CD4-positive, alpha-beta T cell (primary cell): ENCODE measurements at regions of chr14 and their contacts with region 1.

Region 1: GRCh38 chr14:61321385-61322010 is at the start of gene PRKCH:
- DNase-seq: peak; percentile 72 to 93 (median 84)
- ATAC-seq: peak; percentile 73
- H3K4me3 ChIP-seq: peak within 1 kb of the TSS; percentile 95
- H3K4me3 Mint-ChIP-seq: peak within 1 kb of the TSS; percentile 96
- H3K27ac ChIP-seq: peak within 1 kb of the TSS; percentile 66 to 87
- H3K27ac Mint-ChIP-seq: no peak within 1 kb of the TSS
- H3K4me1 ChIP-seq: peaks cover 22% of the 10 kb centered on the region
- H3K4me1 Mint-ChIP-seq: peaks cover 26% of the 10 kb centered on the region
- H3K27me3 ChIP-seq: no peaks in the 10 kb centered on the region
- H3K27me3 Mint-ChIP-seq: no peaks in the 10 kb centered on the region
- CTCF ChIP-seq: peak; percentile 32
- total RNA-seq, gene PRKCH: 378 to 385 TPM

Region 2: GRCh38 chr14:61244009-61244408 is 77.5 kb before region 1 on chr14:
- CTCF ChIA-PET with region 1: no interaction called
- POLR2A ChIA-PET with region 1: no interaction called
- intact Hi-C with region 1: no loop called
- DNase-seq: no peak
- ATAC-seq: no peak
- H3K4me3 ChIP-seq: no peak overlapping the region
- H3K4me3 Mint-ChIP-seq: no peak overlapping the region
- H3K27ac ChIP-seq: no peak overlapping the region
- H3K27ac Mint-ChIP-seq: no peak overlapping the region
- H3K4me1 ChIP-seq: no peaks in the 10 kb centered on the region
- H3K4me1 Mint-ChIP-seq: no peaks in the 10 kb centered on the region
- H3K27me3 ChIP-seq: no peaks in the 10 kb centered on the region
- H3K27me3 Mint-ChIP-seq: peaks cover 32% of the 10 kb centered on the region
- CTCF ChIP-seq: no peak

Region 3: GRCh38 chr14:61296719-61297502 is 24.6 kb before region 1 on chr14:
- CTCF ChIA-PET with region 1: interaction called, 4 read pairs
- POLR2A ChIA-PET with region 1: interaction called, 7 read pairs
- intact Hi-C with region 1: loop called in 1 of 2 experiments (anchors 2 kb)
- DNase-seq: peak in 4 of 14 experiments; percentile 23 to 80 (median 75)
- ATAC-seq: peak; percentile 76
- H3K4me3 ChIP-seq: no peak overlapping the region
- H3K4me3 Mint-ChIP-seq: no peak overlapping the region
- H3K27ac ChIP-seq: no peak overlapping the region
- H3K27ac Mint-ChIP-seq: no peak overlapping the region
- H3K4me1 ChIP-seq: peaks cover 18% of the 10 kb centered on the region
- H3K4me1 Mint-ChIP-seq: peaks cover 56% of the 10 kb centered on the region
- H3K27me3 ChIP-seq: no peaks in the 10 kb centered on the region
- H3K27me3 Mint-ChIP-seq: no peaks in the 10 kb centered on the region
- CTCF ChIP-seq: peak; percentile 77

Region 4: DNA sequence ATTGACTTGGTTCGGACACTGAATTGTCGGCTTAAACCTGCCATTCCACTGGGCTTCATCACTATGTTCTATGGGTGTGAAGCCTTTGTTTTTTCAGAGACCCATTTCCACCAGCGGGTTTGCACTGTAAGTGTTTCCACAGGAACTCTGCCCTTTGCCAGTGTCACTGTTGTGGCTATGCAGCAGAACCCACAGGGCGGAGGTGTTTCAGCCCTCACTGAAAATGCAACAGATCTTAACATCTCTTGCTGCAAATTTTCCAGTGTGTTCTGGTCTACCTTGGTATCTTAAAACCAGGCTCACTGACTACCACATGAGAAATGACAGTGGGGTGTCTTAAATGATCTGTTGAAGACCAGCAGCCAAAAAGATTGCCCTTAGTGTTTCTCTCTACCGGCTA is 21.0 kb after region 1 on chr14:
- CTCF ChIA-PET with region 1: interaction called, 23 read pairs
- POLR2A ChIA-PET with region 1: interaction called, 185 read pairs
- intact Hi-C with region 1: loop called (anchors 1 to 2 kb)
- DNase-seq: peak; percentile 60 to 93 (median 76)
- ATAC-seq: peak; percentile 57
- H3K4me3 ChIP-seq: peak overlapping the region; percentile 23
- H3K4me3 Mint-ChIP-seq: peak overlapping the region; percentile 87
- H3K27ac ChIP-seq: peak overlapping the region; percentile 79 to 88
- H3K27ac Mint-ChIP-seq: peak overlapping the region; percentile 99
- H3K4me1 ChIP-seq: peaks cover 90% of the 10 kb centered on the region
- H3K4me1 Mint-ChIP-seq: peaks cover 92% of the 10 kb centered on the region
- H3K27me3 ChIP-seq: no peaks in the 10 kb centered on the region
- H3K27me3 Mint-ChIP-seq: no peaks in the 10 kb centered on the region
- CTCF ChIP-seq: no peak

Region 5: DNA sequence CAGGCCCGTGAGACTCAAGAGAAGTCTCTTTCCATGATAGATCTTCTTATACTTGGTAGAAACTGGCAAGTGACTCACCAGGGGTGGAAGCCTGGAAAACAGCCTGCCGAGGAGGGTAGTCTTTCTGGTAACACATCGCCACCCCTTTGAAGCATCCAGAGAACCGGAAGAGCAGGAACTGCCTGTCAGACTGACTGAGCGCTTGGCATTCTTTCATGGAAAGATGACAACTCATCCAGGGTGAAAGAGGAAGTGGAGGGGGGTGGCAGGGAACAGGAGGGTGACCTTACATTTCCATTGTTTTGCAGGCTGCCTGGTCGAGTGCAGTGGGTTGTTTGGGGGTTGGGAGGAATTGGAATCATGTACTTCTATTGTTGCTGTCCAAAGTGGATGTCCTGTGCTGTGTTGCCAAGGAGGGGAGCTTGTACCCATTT is 34.4 kb after region 1 on chr14:
- CTCF ChIA-PET with region 1: interaction called, 5 read pairs
- POLR2A ChIA-PET with region 1: interaction called, 5 read pairs
- intact Hi-C with region 1: loop called in 1 of 2 experiments (anchors 5 kb)
- DNase-seq: peak in 8 of 14 experiments; percentile 39 to 67 (median 52)
- ATAC-seq: peak; percentile 80
- H3K4me3 ChIP-seq: no peak overlapping the region
- H3K4me3 Mint-ChIP-seq: peak overlapping the region; percentile 81
- H3K27ac ChIP-seq: peak overlapping the region in 1 of 2 donors; percentile 7
- H3K27ac Mint-ChIP-seq: peak overlapping the region; percentile 99
- H3K4me1 ChIP-seq: peaks cover 71% of the 10 kb centered on the region
- H3K4me1 Mint-ChIP-seq: peaks cover 98% of the 10 kb centered on the region
- H3K27me3 ChIP-seq: no peaks in the 10 kb centered on the region
- H3K27me3 Mint-ChIP-seq: no peaks in the 10 kb centered on the region
- CTCF ChIP-seq: no peak

Region 6: DNA sequence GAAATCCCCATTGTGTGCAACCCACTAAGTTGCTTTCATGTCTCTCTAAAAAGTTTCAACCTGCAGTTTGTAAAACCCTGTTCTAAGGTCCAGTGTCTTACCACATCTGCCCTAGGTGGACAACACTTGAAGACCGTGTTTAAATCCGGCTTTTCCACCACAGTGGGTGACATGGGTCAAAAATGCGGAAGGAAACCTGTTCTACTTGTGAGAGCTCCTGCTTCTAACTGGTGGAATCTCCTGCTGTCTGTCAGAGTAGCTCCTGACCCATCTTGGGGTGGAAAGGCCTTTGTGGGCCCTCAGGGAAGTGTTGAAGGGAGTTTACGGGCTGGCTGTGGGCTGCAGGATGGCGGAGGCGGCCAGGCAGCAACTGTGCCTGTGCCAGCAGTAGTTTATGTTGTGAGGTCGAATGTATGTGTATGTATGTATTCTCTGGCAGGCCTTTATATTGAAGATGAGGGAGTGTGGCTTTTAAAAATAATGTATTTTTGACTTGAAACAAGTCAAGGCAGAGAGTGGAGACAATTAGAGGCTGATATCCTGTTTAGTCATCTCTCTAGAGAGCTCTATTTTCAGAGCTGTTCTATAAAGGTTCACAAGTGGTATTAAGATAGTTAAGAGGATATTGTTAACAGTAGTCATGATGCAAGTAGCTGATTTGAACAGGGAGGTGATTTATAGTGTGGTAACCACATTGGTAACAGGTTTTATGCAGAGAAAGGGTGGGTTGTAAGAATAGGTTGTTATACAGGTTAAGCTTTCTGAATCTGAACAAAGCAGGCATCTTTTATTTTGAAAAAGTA is 66.9 kb after region 1 on chr14:
- CTCF ChIA-PET with region 1: interaction called, 6 read pairs
- POLR2A ChIA-PET with region 1: interaction called, 21 read pairs
- intact Hi-C with region 1: loop called (anchors 1 to 5 kb)
- DNase-seq: peak in 4 of 14 experiments; percentile 26 to 78 (median 62)
- ATAC-seq: peak; percentile 77
- H3K4me3 ChIP-seq: peak overlapping the region; percentile 25
- H3K4me3 Mint-ChIP-seq: no peak overlapping the region
- H3K27ac ChIP-seq: peak overlapping the region; percentile 72
- H3K27ac Mint-ChIP-seq: no peak overlapping the region
- H3K4me1 ChIP-seq: peaks cover 72% of the 10 kb centered on the region
- H3K4me1 Mint-ChIP-seq: peaks cover 39% of the 10 kb centered on the region
- H3K27me3 ChIP-seq: no peaks in the 10 kb centered on the region
- H3K27me3 Mint-ChIP-seq: no peaks in the 10 kb centered on the region
- CTCF ChIP-seq: no peak

Region 7: GRCh38 chr14:61403411-61403810 is 81.9 kb after region 1 on chr14:
- CTCF ChIA-PET with region 1: interaction called, 5 read pairs
- POLR2A ChIA-PET with region 1: interaction called, 27 read pairs
- intact Hi-C with region 1: loop called in 1 of 2 experiments (anchors 5 kb)
- DNase-seq: peak in 5 of 14 experiments; percentile 14 to 80 (median 71)
- ATAC-seq: peak; percentile 80
- H3K4me3 ChIP-seq: peak overlapping the region; percentile 9
- H3K4me3 Mint-ChIP-seq: peak overlapping the region; percentile 84
- H3K27ac ChIP-seq: peak overlapping the region; percentile 23 to 77
- H3K27ac Mint-ChIP-seq: peak overlapping the region; percentile 80
- H3K4me1 ChIP-seq: peaks cover 63% of the 10 kb centered on the region
- H3K4me1 Mint-ChIP-seq: peaks cover 92% of the 10 kb centered on the region
- H3K27me3 ChIP-seq: no peaks in the 10 kb centered on the region
- H3K27me3 Mint-ChIP-seq: no peaks in the 10 kb centered on the region
- CTCF ChIP-seq: no peak

Region 8: GRCh38 chr14:61456720-61457119 is 135.2 kb after region 1 on chr14:
- CTCF ChIA-PET with region 1: interaction called, 3 read pairs
- POLR2A ChIA-PET with region 1: interaction called, 19 read pairs
- intact Hi-C with region 1: loop called in 1 of 2 experiments (anchors 2 kb)
- DNase-seq: peak; percentile 66 to 92 (median 81)
- ATAC-seq: peak; percentile 55
- H3K4me3 ChIP-seq: no peak overlapping the region
- H3K4me3 Mint-ChIP-seq: peak overlapping the region; percentile 71
- H3K27ac ChIP-seq: no peak overlapping the region
- H3K27ac Mint-ChIP-seq: peak overlapping the region; percentile 91
- H3K4me1 ChIP-seq: peaks cover 66% of the 10 kb centered on the region
- H3K4me1 Mint-ChIP-seq: peaks cover 92% of the 10 kb centered on the region
- H3K27me3 ChIP-seq: no peaks in the 10 kb centered on the region
- H3K27me3 Mint-ChIP-seq: no peaks in the 10 kb centered on the region
- CTCF ChIP-seq: peak; percentile 90

Region 9: GRCh38 chr14:61512026-61512834 is 190.7 kb after region 1 on chr14:
- CTCF ChIA-PET with region 1: no interaction called
- POLR2A ChIA-PET with region 1: no interaction called
- intact Hi-C with region 1: no loop called
- DNase-seq: no peak
- ATAC-seq: peak; percentile 27
- H3K4me3 ChIP-seq: no peak overlapping the region
- H3K4me3 Mint-ChIP-seq: peak overlapping the region; percentile 39
- H3K27ac ChIP-seq: peak overlapping the region in 1 of 2 donors; percentile 15
- H3K27ac Mint-ChIP-seq: peak overlapping the region; percentile 74
- H3K4me1 ChIP-seq: peaks cover 52% of the 10 kb centered on the region
- H3K4me1 Mint-ChIP-seq: peaks cover 93% of the 10 kb centered on the region
- H3K27me3 ChIP-seq: no peaks in the 10 kb centered on the region
- H3K27me3 Mint-ChIP-seq: no peaks in the 10 kb centered on the region
- CTCF ChIP-seq: no peak